Activated CD4-positive, alpha-beta T cell treated with anti-CD3 and anti-CD28 coated beads for 36 hours (primary cell): ENCODE measurements at regions of chr20 and their contacts with region 1.

Region 1: DNA sequence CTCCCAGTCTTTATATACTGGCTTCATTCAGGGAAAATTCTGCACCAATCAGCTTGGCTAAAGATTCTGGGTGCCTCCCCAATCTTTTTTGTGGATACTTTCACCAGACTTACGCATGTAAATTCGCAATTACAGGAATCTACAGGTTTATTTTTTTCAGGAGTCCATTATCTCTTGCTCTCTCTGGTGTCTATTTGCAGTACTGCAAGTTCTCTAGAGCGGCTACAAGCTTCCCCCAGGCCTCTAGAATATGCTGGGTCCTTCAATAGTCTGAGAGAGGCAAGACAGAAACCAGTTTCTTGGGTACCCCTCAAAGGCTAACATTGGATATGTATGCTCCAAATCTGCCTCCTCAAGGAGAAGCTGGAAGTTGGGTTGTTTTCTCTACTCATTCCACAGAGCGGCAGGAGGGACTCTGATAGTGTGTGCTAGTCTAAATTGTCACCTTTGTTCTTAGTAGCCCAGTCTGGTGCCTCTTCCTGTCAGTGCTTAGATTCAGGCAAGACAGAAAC is 58.5 kb downstream of the SUN5 start:
- DNase-seq: peak; percentile 45
- ATAC-seq: peak; percentile 93
- H3K4me3 Mint-ChIP-seq: no peak overlapping the region
- H3K27ac Mint-ChIP-seq: peak overlapping the region; percentile 64
- H3K4me1 Mint-ChIP-seq: peaks cover 36% of the 10 kb centered on the region
- H3K27me3 Mint-ChIP-seq: no peaks in the 10 kb centered on the region

Region 2: GRCh38 chr20:32902456-32903420 is 43.0 kb before region 1 on chr20:
- CTCF ChIA-PET with region 1: interaction called, 23 read pairs
- POLR2A ChIA-PET with region 1: no interaction called
- intact Hi-C with region 1: loop called (anchors 1 kb)
- DNase-seq: peak; percentile 86
- ATAC-seq: peak; percentile 86
- H3K4me3 Mint-ChIP-seq: no peak overlapping the region
- H3K27ac Mint-ChIP-seq: peak overlapping the region; percentile 58
- H3K4me1 Mint-ChIP-seq: peaks cover 25% of the 10 kb centered on the region
- H3K27me3 Mint-ChIP-seq: no peaks in the 10 kb centered on the region

Region 3: GRCh38 chr20:32966881-32967781 is 21.4 kb after region 1 on chr20:
- CTCF ChIA-PET with region 1: interaction called, 14 read pairs
- POLR2A ChIA-PET with region 1: interaction called, 4 read pairs
- intact Hi-C with region 1: loop called in 1 of 2 experiments (anchors 1 kb)
- DNase-seq: peak; percentile 79
- ATAC-seq: peak; percentile 29
- H3K4me3 Mint-ChIP-seq: peak overlapping the region; percentile 53
- H3K27ac Mint-ChIP-seq: no peak overlapping the region
- H3K4me1 Mint-ChIP-seq: peaks cover 14% of the 10 kb centered on the region
- H3K27me3 Mint-ChIP-seq: no peaks in the 10 kb centered on the region

Region 4: DNA sequence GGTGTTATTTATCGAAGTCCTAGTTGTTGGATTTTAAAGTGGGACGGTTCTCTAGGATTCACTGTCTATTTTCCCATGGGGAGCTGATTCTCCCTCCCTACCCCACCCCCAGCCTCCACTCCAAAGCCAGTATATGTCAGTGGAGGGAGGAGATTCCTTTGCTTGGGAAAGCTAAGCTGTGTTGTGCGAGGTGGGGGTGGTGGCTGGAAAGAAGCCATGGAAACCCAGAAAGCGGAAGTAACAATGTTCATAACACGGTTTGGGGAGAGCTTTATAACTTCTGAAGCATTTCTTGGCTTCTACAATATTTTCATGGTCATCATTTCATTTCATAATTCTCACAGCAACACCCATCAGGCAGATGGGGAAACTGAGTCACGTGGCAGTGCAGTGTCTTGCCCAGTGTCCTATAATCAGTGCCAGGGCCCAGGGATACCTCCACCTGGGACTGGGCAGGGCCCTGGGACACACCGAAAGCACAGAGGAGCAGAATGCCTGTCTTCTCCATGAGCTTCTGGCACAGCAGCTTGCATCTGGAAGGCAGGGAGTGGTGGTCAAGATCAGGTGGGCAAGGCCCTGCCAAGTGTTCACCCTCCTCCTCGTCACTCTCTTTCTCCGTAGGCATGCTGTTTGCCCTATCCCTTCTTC is 54.0 kb after region 1 on chr20:
- CTCF ChIA-PET with region 1: interaction called, 25 read pairs
- POLR2A ChIA-PET with region 1: no interaction called
- intact Hi-C with region 1: loop called in 1 of 2 experiments (anchors 10 kb)
- DNase-seq: no peak
- ATAC-seq: no peak
- H3K4me3 Mint-ChIP-seq: no peak overlapping the region
- H3K27ac Mint-ChIP-seq: no peak overlapping the region
- H3K4me1 Mint-ChIP-seq: peaks cover 23% of the 10 kb centered on the region
- H3K27me3 Mint-ChIP-seq: no peaks in the 10 kb centered on the region